Posterior cingulate gyrus (tissue), 11 donors: ENCODE measurements at regions of chr16 and their contacts with region 1.

Region 1: DNA sequence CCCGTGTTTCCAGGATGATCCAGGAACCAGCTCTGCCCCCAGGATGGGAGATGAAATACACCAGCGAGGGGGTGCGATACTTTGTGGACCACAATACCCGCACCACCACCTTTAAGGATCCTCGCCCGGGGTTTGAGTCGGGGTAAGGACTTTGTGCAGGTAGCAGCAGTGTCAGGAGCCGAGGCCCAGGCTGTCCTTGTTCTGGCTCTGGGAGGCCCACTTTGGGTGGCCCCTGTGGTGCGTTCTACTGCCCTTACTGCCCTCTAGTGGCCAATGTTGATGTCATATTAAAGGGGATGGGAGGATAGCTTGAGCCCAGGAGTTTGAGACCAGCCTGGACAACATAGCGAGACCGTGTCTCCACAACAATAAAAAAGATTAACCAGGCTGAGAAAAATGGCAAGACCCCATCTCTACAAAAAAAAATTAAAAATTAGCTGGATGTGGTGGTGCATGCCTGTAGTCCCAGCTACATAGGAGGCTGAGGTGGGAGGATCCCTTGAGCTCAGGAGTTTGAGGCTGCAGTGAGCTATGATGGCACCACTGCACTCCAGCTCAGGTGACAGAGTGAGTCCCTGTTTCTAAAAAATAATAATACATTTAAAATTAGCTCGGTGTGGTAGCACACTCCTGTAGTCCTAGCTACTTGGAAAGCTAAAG is 20.9 kb upstream of the CLEC18A start:
- DNase-seq: peak in 6 of 10 donors; percentile 33 to 88 (median 50)

Region 2: DNA sequence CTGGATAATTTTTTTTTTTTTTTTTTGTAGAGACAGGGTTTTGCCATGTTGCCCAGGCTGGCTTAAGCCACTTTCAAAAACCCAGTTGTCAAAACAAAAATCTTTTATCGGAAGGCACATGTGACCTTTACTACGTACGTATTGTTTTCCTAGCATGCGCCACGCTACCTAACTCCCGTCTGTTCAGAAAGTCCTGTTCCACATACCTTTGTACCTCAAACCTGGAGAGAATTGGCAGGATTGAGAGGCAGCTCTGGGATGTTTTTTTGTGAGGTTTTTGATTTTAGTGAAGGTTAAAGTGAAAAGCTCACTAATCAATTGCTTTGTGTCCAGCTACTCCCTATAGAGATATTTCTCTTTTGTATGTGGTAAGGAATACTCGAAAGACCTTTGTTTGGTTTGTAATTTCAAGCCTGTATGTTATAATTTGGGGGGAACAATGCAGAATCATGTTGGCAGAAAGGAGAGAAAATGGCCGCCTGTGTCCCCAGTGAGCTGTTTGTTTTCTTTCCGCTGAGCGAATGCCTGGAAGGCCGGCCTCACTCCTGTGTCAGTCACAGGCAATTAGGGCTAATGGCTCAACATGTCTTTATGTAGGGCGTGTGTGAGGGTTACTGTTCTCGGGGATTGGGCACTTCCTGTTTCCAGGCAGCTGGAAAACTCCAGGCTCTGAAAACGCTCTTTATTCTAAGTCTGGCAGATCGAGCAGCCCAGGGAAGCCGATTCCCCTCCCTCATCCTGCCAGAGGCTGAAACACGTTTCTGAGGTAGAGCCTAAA is 39.9 kb before region 1 on chr16:
- intact Hi-C with region 1: loop called (anchors 5 kb)
- DNase-seq: peak; percentile 69 to 98 (median 79)